Sigmoid colon (tissue), 7 donors: ENCODE measurements at regions of chr12 and their contacts with region 1.

Region 1: GRCh38 chr12:14948672-14949071 is 10.3 kb upstream of the ERP27 start:
- DNase-seq: no peak
- H3K4me3 ChIP-seq: no peak overlapping the region
- H3K27ac ChIP-seq: peak overlapping the region; percentile 55 to 83 (median 68)
- H3K4me1 ChIP-seq: peaks cover 0 to 65% (median 34%) of the 10 kb centered on the region in 4 donors
- H3K27me3 ChIP-seq: no peaks in the 10 kb centered on the region
- CTCF ChIP-seq: no peak
- EP300 ChIP-seq: peak in 1 of 4 donors; percentile 13
- POLR2A ChIP-seq: peak in 1 of 2 donors; percentile 9

Region 2: GRCh38 chr12:14884458-14884878 is 64.2 kb before region 1 on chr12:
- intact Hi-C with region 1: loop called (anchors 5 kb)
- DNase-seq: peak; percentile 95
- H3K4me3 ChIP-seq: peak overlapping the region; percentile 34 to 52 (median 46)
- H3K27ac ChIP-seq: peak overlapping the region; percentile 82 to 87 (median 82)
- H3K4me1 ChIP-seq: peaks cover 0 to 16% (median 13%) of the 10 kb centered on the region in 4 donors
- H3K27me3 ChIP-seq: no peaks in the 10 kb centered on the region
- CTCF ChIP-seq: no peak
- EP300 ChIP-seq: peak in 1 of 4 donors; percentile 18
- POLR2A ChIP-seq: peak; percentile 12 to 20

Region 3: DNA sequence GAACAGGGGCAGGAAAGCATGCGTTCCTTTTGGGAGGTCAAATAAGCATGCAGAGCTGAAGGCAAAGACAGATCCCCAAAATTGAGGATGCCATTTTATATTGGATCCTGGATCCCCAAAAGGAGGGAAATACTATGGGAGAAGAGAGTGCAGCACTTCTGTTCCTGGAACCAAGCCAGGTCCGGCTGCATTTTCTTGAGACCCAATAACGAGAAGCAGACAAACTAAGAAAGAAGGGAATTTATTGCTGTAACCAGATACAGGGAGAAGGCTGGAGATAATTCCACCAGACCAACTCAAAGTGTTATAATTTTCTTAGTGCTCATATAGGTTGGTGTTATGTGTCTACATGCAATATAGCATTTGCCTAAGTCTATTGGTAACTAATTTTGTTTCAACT is 85.0 kb after region 1 on chr12:
- intact Hi-C with region 1: no loop called
- DNase-seq: no peak
- H3K4me3 ChIP-seq: no peak overlapping the region
- H3K27ac ChIP-seq: no peak overlapping the region
- H3K4me1 ChIP-seq: peaks cover 0 to 10% (median 3%) of the 10 kb centered on the region in 4 donors
- H3K27me3 ChIP-seq: no peaks in the 10 kb centered on the region
- CTCF ChIP-seq: no peak
- EP300 ChIP-seq: no peak
- POLR2A ChIP-seq: no peak